H1 (cell line): ENCODE measurements at regions of chr2 and their contacts with region 1.

Region 1: DNA sequence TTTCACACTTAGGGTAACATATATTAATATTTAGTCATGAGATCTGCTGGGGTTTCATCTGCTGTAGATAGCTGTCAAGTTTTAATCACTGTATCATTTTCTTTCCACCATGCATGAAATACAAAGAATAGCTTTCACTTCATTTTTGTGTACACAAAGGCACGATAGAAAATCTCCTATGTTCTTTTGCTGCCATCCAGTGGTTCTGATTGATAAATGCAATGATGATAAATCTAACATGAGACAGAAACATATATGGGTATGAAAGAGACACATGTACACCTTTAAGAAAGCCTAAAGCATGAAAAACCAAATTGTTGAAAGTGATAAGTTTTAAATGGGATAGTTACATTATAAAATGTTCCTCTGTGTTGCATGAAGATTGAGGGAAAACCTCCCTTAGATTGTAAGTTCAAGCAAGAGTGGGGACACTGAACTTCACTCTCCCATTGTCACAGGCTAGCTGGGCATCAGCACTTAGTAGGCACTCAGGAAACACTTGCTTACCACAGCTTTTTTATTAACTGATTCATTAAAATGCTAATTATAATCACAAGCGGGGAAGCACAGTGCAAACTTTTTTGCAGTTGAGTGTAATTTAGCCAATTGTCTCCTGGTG is 31.2 kb downstream of the C1D start:
- DNase-seq: no peak
- H3K4me3 ChIP-seq: no peak overlapping the region
- H3K27ac ChIP-seq: no peak overlapping the region
- H3K4me1 ChIP-seq: no peaks in the 10 kb centered on the region
- H3K27me3 ChIP-seq: no peaks in the 10 kb centered on the region
- CTCF ChIP-seq: peak in 2 of 3 experiments; percentile 27 to 49; a peak in 2 of 4 replicates
- EP300 ChIP-seq: no peak
- POLR2A ChIP-seq: no peak
- RAD21 ChIP-seq: peak; percentile 86 to 90

Region 2: GRCh38 chr2:67650291-67651133 is 381.1 kb before region 1 on chr2:
- CTCF ChIA-PET with region 1: interaction called, 21 read pairs
- POLR2A ChIA-PET with region 1: no interaction called
- DNase-seq: peak; percentile 38 to 76
- H3K4me3 ChIP-seq: no peak overlapping the region
- H3K27ac ChIP-seq: no peak overlapping the region
- H3K4me1 ChIP-seq: peaks cover 0 to 4% (median 0%) of the 10 kb centered on the region in 4 experiments; a peak in 1 of 7 replicates
- H3K27me3 ChIP-seq: no peaks in the 10 kb centered on the region
- CTCF ChIP-seq: peak; percentile 74 to 85 (median 80)
- EP300 ChIP-seq: no peak
- POLR2A ChIP-seq: no peak
- RAD21 ChIP-seq: peak; percentile 90 to 95

Region 3: DNA sequence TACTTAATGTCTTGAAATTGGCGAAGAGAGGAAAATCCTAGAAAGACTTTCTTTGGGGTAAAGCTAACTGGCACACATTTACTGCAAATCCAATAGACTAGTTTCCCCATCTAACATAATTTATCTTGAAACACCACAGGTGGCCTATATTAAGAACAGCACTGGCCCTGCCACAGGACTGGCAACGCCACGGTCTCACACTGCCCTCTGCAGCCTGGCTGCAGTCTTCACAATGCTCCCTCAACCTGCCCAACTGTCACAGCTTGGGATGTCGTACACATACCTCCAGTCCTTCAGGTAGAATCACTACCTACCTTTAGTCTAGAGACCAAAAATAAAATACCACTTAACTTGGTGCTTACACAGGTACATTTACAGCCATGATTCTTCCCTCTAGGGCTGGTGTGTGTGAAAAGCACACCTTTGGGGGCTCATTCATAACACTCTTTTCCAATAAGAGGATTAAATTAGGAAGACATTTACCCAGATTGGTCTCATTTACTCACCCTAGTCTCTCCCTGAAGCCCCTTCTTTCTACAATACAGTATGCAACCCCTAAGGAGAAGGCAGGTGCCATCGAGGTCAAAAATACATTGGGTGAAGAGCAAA is 191.1 kb before region 1 on chr2:
- CTCF ChIA-PET with region 1: interaction called, 25 read pairs
- POLR2A ChIA-PET with region 1: no interaction called
- DNase-seq: peak; percentile 39 to 68
- H3K4me3 ChIP-seq: no peak overlapping the region
- H3K27ac ChIP-seq: no peak overlapping the region
- H3K4me1 ChIP-seq: peaks cover 0 to 2% (median 0%) of the 10 kb centered on the region in 4 experiments; a peak in 1 of 7 replicates
- H3K27me3 ChIP-seq: no peaks in the 10 kb centered on the region
- CTCF ChIP-seq: peak; percentile 86 to 96 (median 95)
- EP300 ChIP-seq: no peak
- POLR2A ChIP-seq: no peak
- RAD21 ChIP-seq: peak; percentile 98 to 99

Region 4: DNA sequence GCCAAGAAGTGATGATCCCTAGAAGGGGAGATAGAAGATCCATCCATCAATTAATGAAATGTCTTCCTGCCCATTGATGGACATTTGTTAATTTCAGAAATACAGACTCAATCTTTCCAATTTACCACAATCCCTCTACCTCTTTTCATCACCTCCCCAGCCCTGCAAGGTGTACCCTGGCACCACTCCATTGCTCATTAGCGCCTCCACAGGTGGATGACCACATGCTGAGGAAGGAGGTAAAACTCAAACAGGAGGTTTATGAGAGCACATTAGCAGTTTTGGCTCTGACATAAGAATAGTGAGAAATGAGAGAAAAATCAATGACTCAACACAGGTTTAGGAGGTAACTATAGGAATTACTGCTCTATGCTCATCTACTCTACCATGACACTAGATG is 176.9 kb before region 1 on chr2:
- CTCF ChIA-PET with region 1: interaction called, 10 read pairs
- POLR2A ChIA-PET with region 1: no interaction called
- DNase-seq: peak in 1 of 2 experiments; percentile 50
- H3K4me3 ChIP-seq: no peak overlapping the region
- H3K27ac ChIP-seq: no peak overlapping the region
- H3K4me1 ChIP-seq: no peaks in the 10 kb centered on the region
- H3K27me3 ChIP-seq: peaks cover 0 to 2% (median 0%) of the 10 kb centered on the region in 4 experiments; a peak in 1 of 7 replicates
- CTCF ChIP-seq: peak in 2 of 3 experiments; percentile 50 to 54; a peak in 3 of 4 replicates
- EP300 ChIP-seq: no peak
- POLR2A ChIP-seq: no peak
- RAD21 ChIP-seq: peak in 1 of 2 experiments; percentile 34; a peak in 2 of 4 replicates

Region 5: GRCh38 chr2:67918471-67918870 is 113.2 kb before region 1 on chr2:
- CTCF ChIA-PET with region 1: interaction called, 10 read pairs
- POLR2A ChIA-PET with region 1: no interaction called
- DNase-seq: no peak
- H3K4me3 ChIP-seq: no peak overlapping the region
- H3K27ac ChIP-seq: no peak overlapping the region
- H3K4me1 ChIP-seq: peaks cover 0 to 11% (median 5%) of the 10 kb centered on the region in 4 experiments; a peak in 5 of 7 replicates
- H3K27me3 ChIP-seq: no peaks in the 10 kb centered on the region
- CTCF ChIP-seq: no peak
- EP300 ChIP-seq: no peak
- POLR2A ChIP-seq: no peak
- RAD21 ChIP-seq: no peak

Region 6: DNA sequence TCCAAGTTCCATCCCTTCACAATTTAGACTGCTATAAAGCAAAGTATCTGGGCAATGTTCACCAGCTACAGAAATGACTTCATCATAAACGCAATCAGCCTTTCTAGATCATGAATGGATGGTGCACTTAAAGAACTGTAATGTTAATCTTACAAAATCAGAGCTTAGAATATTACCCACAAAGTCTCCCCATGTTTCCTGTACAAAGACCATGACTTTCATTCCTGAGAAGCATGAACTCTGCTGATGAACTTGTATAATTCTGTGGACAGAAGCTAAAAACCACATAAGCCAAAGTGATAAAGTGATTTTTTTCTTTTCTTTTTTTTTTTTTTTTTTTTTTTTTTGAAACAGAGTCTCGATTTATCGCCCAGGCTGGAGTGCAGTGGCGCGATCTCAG is 22.1 kb before region 1 on chr2:
- CTCF ChIA-PET with region 1: no interaction called
- POLR2A ChIA-PET with region 1: no interaction called
- DNase-seq: no peak
- H3K4me3 ChIP-seq: no peak overlapping the region
- H3K27ac ChIP-seq: no peak overlapping the region
- H3K4me1 ChIP-seq: no peaks in the 10 kb centered on the region
- H3K27me3 ChIP-seq: no peaks in the 10 kb centered on the region
- CTCF ChIP-seq: no peak
- EP300 ChIP-seq: no peak
- POLR2A ChIP-seq: no peak
- RAD21 ChIP-seq: no peak

Region 7: GRCh38 chr2:68074050-68074449 is 42.4 kb after region 1 on chr2:
- CTCF ChIA-PET with region 1: no interaction called
- POLR2A ChIA-PET with region 1: no interaction called
- DNase-seq: no peak
- H3K4me3 ChIP-seq: no peak overlapping the region
- H3K27ac ChIP-seq: no peak overlapping the region
- H3K4me1 ChIP-seq: no peaks in the 10 kb centered on the region
- H3K27me3 ChIP-seq: no peaks in the 10 kb centered on the region
- CTCF ChIP-seq: no peak
- EP300 ChIP-seq: no peak
- POLR2A ChIP-seq: no peak
- RAD21 ChIP-seq: no peak